Activated T-helper 2 cell treated with anti-CD3 and anti-CD28 coated beads, Interferon-gamma antibody, Interleukin-2, Interleukin-4, amounts not matched to agents 10 μg/mL and 5 μg/mL and 100 μg/mL, durations not matched to agents 14 hours and 24 hours and 36 hours (primary cell): ENCODE measurements at regions of chr1 and their contacts with region 1.

Region 1: DNA sequence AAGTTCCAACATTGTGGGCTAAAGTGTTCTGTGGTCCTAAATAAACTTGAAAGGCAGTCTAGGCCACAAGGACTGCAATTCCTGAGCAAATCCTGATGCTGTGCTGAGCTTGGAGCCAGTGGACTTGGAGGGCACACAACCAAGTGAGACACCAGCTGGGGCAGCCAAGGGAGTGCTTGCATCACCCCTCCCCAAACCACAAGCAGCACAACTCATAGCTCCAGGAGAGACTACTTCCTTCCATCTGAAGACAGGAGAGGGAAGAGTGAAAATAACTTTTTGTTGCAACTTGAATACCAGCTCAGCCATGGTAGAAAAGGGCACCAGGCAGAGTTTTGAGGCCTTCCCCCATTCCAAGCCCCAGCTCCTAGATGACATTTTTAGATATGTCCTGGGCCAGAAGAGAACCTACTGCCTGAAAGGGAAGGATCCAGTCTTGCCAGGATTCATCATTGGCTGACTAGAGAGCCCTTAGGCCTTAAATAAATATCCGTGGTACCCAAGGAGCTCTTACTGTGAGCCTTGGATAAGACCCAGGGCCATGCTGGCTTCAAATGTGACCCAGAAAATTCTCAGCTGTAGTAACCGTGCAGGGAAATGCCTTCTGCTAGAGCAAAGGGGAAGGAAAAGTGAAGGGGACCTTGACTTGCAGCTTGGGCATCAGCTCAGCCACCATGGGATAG is 35.4 kb upstream of the LRRC8B start:
- DNase-seq: no peak
- H3K4me3 Mint-ChIP-seq: no peak overlapping the region
- H3K27ac Mint-ChIP-seq: no peak overlapping the region
- H3K4me1 Mint-ChIP-seq: peaks cover 31% of the 10 kb centered on the region
- H3K27me3 Mint-ChIP-seq: peaks cover 2% of the 10 kb centered on the region

Region 2: DNA sequence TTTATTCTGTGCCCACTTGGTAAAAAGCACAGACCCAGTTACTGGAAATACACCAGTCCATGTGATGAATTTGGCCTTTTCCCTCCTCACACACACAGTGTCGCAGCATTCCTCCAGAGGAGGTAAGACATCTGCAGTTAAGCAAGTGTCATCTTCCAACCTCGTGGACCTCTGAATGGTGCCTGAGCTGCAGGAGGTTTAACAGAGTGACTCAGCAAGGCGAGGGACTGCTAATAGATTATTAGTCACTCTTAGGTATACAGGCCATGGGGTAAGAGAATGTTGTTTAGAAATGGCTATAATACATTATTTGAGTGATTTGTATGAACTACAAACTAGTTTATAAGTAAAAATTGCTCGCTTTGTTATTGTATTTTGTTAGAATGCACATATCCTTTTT is 26.9 kb after region 1 on chr1:
- intact Hi-C with region 1: loop called (anchors 2 kb)
- DNase-seq: no peak
- H3K4me3 Mint-ChIP-seq: no peak overlapping the region
- H3K27ac Mint-ChIP-seq: no peak overlapping the region
- H3K4me1 Mint-ChIP-seq: peaks cover 18% of the 10 kb centered on the region
- H3K27me3 Mint-ChIP-seq: no peaks in the 10 kb centered on the region